ENCODE measurements at regions of chr2 and their contacts with region 1.

Region 1: DNA sequence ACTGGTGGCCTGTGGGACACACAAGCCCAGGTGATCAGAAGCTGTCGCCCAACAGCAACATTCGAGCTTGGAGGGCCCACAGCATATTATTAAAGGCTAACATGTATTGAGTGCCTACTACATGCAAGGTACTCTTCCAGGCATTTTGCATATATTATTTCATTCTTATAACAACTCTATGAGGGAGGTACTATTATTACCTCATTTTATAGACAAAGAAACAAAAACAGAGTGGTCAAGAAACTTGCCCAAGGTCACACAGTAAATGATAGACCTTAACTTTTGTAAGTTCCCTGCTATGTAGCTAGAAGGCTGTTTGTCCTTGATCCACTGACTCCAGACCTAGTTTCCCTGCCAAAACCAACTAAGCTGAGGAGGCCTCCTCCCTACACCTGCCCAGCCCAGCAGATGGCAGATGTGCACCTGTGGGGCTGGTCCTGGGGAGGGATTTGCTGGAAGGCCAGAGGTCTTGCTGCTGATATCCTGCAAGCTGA is 35.7 kb downstream of the KANSL3 start:
- DNase-seq: peak in 2 of 5 donors; percentile 7 to 11
- H3K4me3 ChIP-seq: no peak overlapping the region
- H3K4me3 Mint-ChIP-seq: no peak overlapping the region
- H3K27ac ChIP-seq: no peak overlapping the region
- H3K27ac Mint-ChIP-seq: peak overlapping the region in 4 of 7 donors; percentile 17 to 58 (median 34)
- H3K4me1 ChIP-seq: no peaks in the 10 kb centered on the region
- H3K4me1 Mint-ChIP-seq: peaks cover 1 to 12% (median 10%) of the 10 kb centered on the region in 4 donors
- H3K27me3 ChIP-seq: no peaks in the 10 kb centered on the region
- H3K27me3 Mint-ChIP-seq: no peaks in the 10 kb centered on the region

Region 2: DNA sequence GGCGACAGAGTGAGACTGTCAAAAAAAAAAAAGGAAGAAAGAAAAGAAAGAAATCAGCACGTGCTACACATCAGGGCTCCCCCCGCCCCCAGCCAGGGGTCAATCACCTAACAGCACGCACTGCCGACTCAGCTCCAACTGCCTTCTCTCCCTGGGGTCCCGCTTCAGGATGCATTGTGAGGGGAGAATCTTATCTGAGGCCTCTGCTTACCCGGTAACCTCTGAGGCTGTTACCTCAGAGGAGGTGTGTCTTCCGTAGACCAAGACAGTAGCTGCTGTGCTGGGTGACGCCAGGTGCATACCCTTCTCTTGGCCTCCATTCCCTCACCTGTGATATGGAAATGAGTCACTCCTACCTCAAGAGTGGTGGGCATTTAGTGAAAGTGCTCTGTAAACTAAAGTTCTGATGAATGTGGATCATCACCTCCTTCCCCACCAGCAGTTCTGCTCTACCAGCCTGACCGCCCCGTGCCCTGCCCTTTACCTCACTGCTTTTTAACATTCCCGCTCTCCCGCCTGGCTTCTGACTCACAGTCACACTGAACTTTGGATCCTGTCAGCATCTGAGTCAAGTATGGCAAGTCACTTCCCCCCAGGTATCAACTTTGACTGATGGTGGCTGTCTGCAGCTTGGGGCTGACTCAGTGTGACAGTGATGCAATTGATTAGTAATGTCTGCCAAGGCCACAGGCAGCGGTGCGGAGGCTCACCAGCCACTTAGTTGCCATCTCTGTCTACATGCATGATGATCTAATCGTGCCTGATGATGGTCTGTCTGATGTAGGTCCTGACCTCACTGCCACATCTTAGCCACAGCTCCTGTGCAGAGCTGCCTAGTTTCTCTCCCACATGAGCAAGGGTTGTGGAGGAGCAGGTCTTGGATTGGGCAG is 45.7 kb before region 1 on chr2:
- CTCF ChIA-PET with region 1: no interaction called
- POLR2A ChIA-PET with region 1: no interaction called
- intact Hi-C with region 1: no loop called
- DNase-seq: peak in 1 of 5 donors; percentile 76
- H3K4me3 ChIP-seq: no peak overlapping the region
- H3K4me3 Mint-ChIP-seq: peak overlapping the region in 1 of 8 donors; percentile 23
- H3K27ac ChIP-seq: no peak overlapping the region
- H3K27ac Mint-ChIP-seq: peak overlapping the region in 6 of 7 donors; percentile 37 to 78 (median 68)
- H3K4me1 ChIP-seq: peaks cover 17% of the 10 kb centered on the region
- H3K4me1 Mint-ChIP-seq: peaks cover 1 to 32% (median 12%) of the 10 kb centered on the region in 4 donors
- H3K27me3 ChIP-seq: no peaks in the 10 kb centered on the region
- H3K27me3 Mint-ChIP-seq: no peaks in the 10 kb centered on the region

Region 3: DNA sequence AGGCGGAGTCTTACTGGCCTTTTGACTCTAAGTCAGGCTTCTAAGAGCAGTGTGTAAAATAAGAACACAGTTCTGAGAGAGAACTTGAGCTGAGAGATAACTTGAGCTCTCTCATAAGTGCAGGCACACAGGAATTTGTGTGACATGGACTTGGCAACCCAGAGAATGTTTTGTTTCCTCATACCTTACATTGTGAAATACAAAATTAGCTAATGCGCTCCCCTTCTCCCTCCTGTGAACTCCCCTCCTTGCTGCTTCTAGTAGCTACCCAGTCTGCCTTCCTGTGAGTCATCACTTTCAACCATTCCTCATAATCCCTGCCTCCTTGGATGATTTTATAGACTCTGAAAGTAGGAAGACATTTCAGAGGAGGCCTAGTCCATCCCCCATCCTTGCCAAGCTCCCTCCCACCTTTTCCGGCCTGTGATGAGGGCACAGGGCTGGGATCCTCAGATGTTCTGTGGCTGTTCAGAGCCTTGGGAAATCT is 62.7 kb after region 1 on chr2:
- CTCF ChIA-PET with region 1: no interaction called
- POLR2A ChIA-PET with region 1: no interaction called
- intact Hi-C with region 1: no loop called
- DNase-seq: no peak
- H3K4me3 ChIP-seq: no peak overlapping the region
- H3K4me3 Mint-ChIP-seq: no peak overlapping the region
- H3K27ac ChIP-seq: no peak overlapping the region
- H3K27ac Mint-ChIP-seq: peak overlapping the region in 2 of 7 donors; percentile 42 to 52
- H3K4me1 ChIP-seq: no peaks in the 10 kb centered on the region
- H3K4me1 Mint-ChIP-seq: no peaks in the 10 kb centered on the region
- H3K27me3 ChIP-seq: no peaks in the 10 kb centered on the region
- H3K27me3 Mint-ChIP-seq: peaks cover 0 to 3% of the 10 kb centered on the region in 2 donors

Region 4: GRCh38 chr2:96769814-96770213 is 167.4 kb after region 1 on chr2:
- CTCF ChIA-PET with region 1: no interaction called
- POLR2A ChIA-PET with region 1: no interaction called
- intact Hi-C with region 1: no loop called
- DNase-seq: no peak
- H3K4me3 ChIP-seq: no peak overlapping the region
- H3K4me3 Mint-ChIP-seq: no peak overlapping the region
- H3K27ac ChIP-seq: no peak overlapping the region
- H3K27ac Mint-ChIP-seq: no peak overlapping the region
- H3K4me1 ChIP-seq: peaks cover 22% of the 10 kb centered on the region
- H3K4me1 Mint-ChIP-seq: peaks cover 25 to 56% (median 42%) of the 10 kb centered on the region in 4 donors
- H3K27me3 ChIP-seq: no peaks in the 10 kb centered on the region
- H3K27me3 Mint-ChIP-seq: no peaks in the 10 kb centered on the region

Region 5: GRCh38 chr2:96801005-96801785 is 198.8 kb after region 1 on chr2:
- CTCF ChIA-PET with region 1: interaction called, 5 read pairs
- POLR2A ChIA-PET with region 1: no interaction called
- intact Hi-C with region 1: loop called (anchors 5 kb)
- DNase-seq: peak; percentile 65 to 70 (median 65)
- H3K4me3 ChIP-seq: no peak overlapping the region
- H3K4me3 Mint-ChIP-seq: no peak overlapping the region
- H3K27ac ChIP-seq: no peak overlapping the region
- H3K27ac Mint-ChIP-seq: no peak overlapping the region
- H3K4me1 ChIP-seq: peaks cover 28% of the 10 kb centered on the region
- H3K4me1 Mint-ChIP-seq: peaks cover 3 to 7% (median 5%) of the 10 kb centered on the region in 4 donors
- H3K27me3 ChIP-seq: no peaks in the 10 kb centered on the region
- H3K27me3 Mint-ChIP-seq: no peaks in the 10 kb centered on the region

Measured in CD4-positive, alpha-beta memory T cell (primary cell).